Activated CD4-positive, alpha-beta T cell treated with anti-CD3 and anti-CD28 coated beads for 36 hours (primary cell): ENCODE measurements at regions of chr7 and their contacts with region 1.

Region 1: GRCh38 chr7:50632561-50633413 is 67.6 kb upstream of the DDC start:
- DNase-seq: peak; percentile 72
- ATAC-seq: peak; percentile 84
- H3K4me3 Mint-ChIP-seq: no peak overlapping the region
- H3K27ac Mint-ChIP-seq: no peak overlapping the region
- H3K4me1 Mint-ChIP-seq: no peaks in the 10 kb centered on the region
- H3K27me3 Mint-ChIP-seq: peaks cover 12% of the 10 kb centered on the region

Region 2: GRCh38 chr7:50446542-50446960 is 186.2 kb before region 1 on chr7:
- CTCF ChIA-PET with region 1: no interaction called
- POLR2A ChIA-PET with region 1: no interaction called
- intact Hi-C with region 1: no loop called
- DNase-seq: peak; percentile 36
- ATAC-seq: peak; percentile 42
- H3K4me3 Mint-ChIP-seq: peak overlapping the region; percentile 16
- H3K27ac Mint-ChIP-seq: peak overlapping the region; percentile 52
- H3K4me1 Mint-ChIP-seq: peaks cover 64% of the 10 kb centered on the region
- H3K27me3 Mint-ChIP-seq: no peaks in the 10 kb centered on the region

Region 3: GRCh38 chr7:50562136-50562535 is 70.7 kb before region 1 on chr7:
- CTCF ChIA-PET with region 1: no interaction called
- POLR2A ChIA-PET with region 1: no interaction called
- intact Hi-C with region 1: no loop called
- DNase-seq: no peak
- ATAC-seq: no peak
- H3K4me3 Mint-ChIP-seq: no peak overlapping the region
- H3K27ac Mint-ChIP-seq: no peak overlapping the region
- H3K4me1 Mint-ChIP-seq: no peaks in the 10 kb centered on the region
- H3K27me3 Mint-ChIP-seq: peaks cover 10% of the 10 kb centered on the region

Region 4: GRCh38 chr7:50621206-50621605 is 11.6 kb before region 1 on chr7:
- CTCF ChIA-PET with region 1: interaction called, 11 read pairs
- POLR2A ChIA-PET with region 1: no interaction called
- intact Hi-C with region 1: no loop called
- DNase-seq: no peak
- ATAC-seq: no peak
- H3K4me3 Mint-ChIP-seq: no peak overlapping the region
- H3K27ac Mint-ChIP-seq: no peak overlapping the region
- H3K4me1 Mint-ChIP-seq: no peaks in the 10 kb centered on the region
- H3K27me3 Mint-ChIP-seq: peaks cover 2% of the 10 kb centered on the region

Region 5: GRCh38 chr7:50679218-50680007 is 46.6 kb after region 1 on chr7:
- CTCF ChIA-PET with region 1: interaction called, 4 read pairs
- POLR2A ChIA-PET with region 1: no interaction called
- intact Hi-C with region 1: loop called in 1 of 2 experiments (anchors 5 kb)
- DNase-seq: no peak
- ATAC-seq: peak; percentile 78
- H3K4me3 Mint-ChIP-seq: no peak overlapping the region
- H3K27ac Mint-ChIP-seq: no peak overlapping the region
- H3K4me1 Mint-ChIP-seq: no peaks in the 10 kb centered on the region
- H3K27me3 Mint-ChIP-seq: no peaks in the 10 kb centered on the region

Region 6: GRCh38 chr7:50745336-50745735 is 112.5 kb after region 1 on chr7:
- CTCF ChIA-PET with region 1: no interaction called
- POLR2A ChIA-PET with region 1: no interaction called
- intact Hi-C with region 1: no loop called
- DNase-seq: no peak
- ATAC-seq: no peak
- H3K4me3 Mint-ChIP-seq: no peak overlapping the region
- H3K27ac Mint-ChIP-seq: no peak overlapping the region
- H3K4me1 Mint-ChIP-seq: peaks cover 7% of the 10 kb centered on the region
- H3K27me3 Mint-ChIP-seq: no peaks in the 10 kb centered on the region

Region 7: GRCh38 chr7:50838675-50839377 is 206.0 kb after region 1 on chr7:
- CTCF ChIA-PET with region 1: no interaction called
- POLR2A ChIA-PET with region 1: no interaction called
- intact Hi-C with region 1: no loop called
- DNase-seq: peak; percentile 20
- ATAC-seq: peak; percentile 23
- H3K4me3 Mint-ChIP-seq: no peak overlapping the region
- H3K27ac Mint-ChIP-seq: no peak overlapping the region
- H3K4me1 Mint-ChIP-seq: no peaks in the 10 kb centered on the region
- H3K27me3 Mint-ChIP-seq: peaks cover 31% of the 10 kb centered on the region